ENCODE measurements at regions of chr10 and their contacts with region 1.

Region 1: GRCh38 chr10:70880077-70880534 is 8.3 kb downstream of the PCBD1 start:
- DNase-seq: peak; percentile 74 to 87 (median 78)
- ATAC-seq: peak; percentile 96
- H3K4me3 ChIP-seq: no peak overlapping the region
- H3K27ac ChIP-seq: no peak overlapping the region
- H3K4me1 ChIP-seq: no peaks in the 10 kb centered on the region; a peak in 1 of 5 replicates
- H3K27me3 ChIP-seq: no peaks in the 10 kb centered on the region
- CTCF ChIP-seq: peak; percentile 91 to 95 (median 95)
- EP300 ChIP-seq: no peak
- POLR2A ChIP-seq: no peak
- RAD21 ChIP-seq: peak; percentile 99

Region 2: GRCh38 chr10:70461215-70461986 is 418.7 kb before region 1 on chr10:
- CTCF ChIA-PET with region 1: interaction called, 21 read pairs
- POLR2A ChIA-PET with region 1: no interaction called
- in situ Hi-C with region 1: loop called (anchors 10 kb)
- intact Hi-C with region 1: loop called (anchors 5 kb)
- DNase-seq: peak; percentile 81 to 86 (median 83)
- ATAC-seq: peak; percentile 90
- H3K4me3 ChIP-seq: no peak overlapping the region
- H3K27ac ChIP-seq: no peak overlapping the region
- H3K4me1 ChIP-seq: peaks cover 5 to 15% of the 10 kb centered on the region in 2 experiments; a peak in 3 of 5 replicates
- H3K27me3 ChIP-seq: peaks cover 49 to 73% of the 10 kb centered on the region in 2 experiments
- CTCF ChIP-seq: peak; percentile 92 to 95 (median 94)
- EP300 ChIP-seq: no peak
- POLR2A ChIP-seq: no peak
- RAD21 ChIP-seq: peak; percentile 84 to 95

Region 3: DNA sequence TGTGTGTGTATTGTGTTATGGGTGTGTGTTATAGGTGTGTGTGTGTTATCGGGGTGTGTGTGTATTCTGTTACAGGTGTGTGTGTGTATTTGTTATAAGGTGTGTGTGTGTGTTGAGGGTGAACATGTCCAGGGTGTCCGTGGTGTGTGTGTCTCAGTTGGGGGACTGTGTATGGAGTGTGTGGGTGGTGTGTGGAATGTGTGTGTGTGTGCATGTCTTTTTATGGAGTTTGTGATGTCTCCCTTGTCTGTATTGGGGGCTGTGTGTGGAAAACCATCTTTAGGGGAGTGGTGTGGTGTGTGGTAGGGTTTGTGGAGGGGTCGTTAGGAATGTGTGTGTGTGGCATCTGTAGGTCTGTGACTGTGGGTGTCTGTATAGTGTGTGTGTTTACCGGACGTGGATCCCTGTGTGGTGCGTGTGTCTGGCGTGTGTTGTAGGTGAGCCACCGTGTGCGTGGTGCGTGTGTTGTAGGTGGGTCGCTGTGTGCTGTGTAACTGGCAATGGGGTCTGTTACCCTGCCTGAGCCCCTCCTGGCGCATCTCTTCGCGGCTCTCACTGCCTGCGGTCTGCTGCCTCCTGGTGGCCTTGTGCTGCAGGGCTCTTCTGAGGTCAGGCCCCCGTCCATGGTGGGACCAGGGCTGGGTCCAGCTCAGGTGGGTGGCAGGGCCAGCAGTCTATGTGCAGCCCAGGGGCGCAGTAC is 339.9 kb before region 1 on chr10:
- CTCF ChIA-PET with region 1: interaction called, 10 read pairs
- POLR2A ChIA-PET with region 1: no interaction called
- in situ Hi-C with region 1: loop called (anchors 5 kb)
- intact Hi-C with region 1: no loop called
- DNase-seq: peak; percentile 65 to 83 (median 80)
- ATAC-seq: peak; percentile 84
- H3K4me3 ChIP-seq: no peak overlapping the region
- H3K27ac ChIP-seq: no peak overlapping the region
- H3K4me1 ChIP-seq: peaks cover 0 to 39% of the 10 kb centered on the region in 2 experiments; a peak in 3 of 5 replicates
- H3K27me3 ChIP-seq: peaks cover 10 to 48% of the 10 kb centered on the region in 2 experiments; a peak in 3 of 5 replicates
- CTCF ChIP-seq: peak; percentile 88 to 95 (median 94)
- EP300 ChIP-seq: no peak
- POLR2A ChIP-seq: no peak
- RAD21 ChIP-seq: peak; percentile 71 to 92

Region 4: DNA sequence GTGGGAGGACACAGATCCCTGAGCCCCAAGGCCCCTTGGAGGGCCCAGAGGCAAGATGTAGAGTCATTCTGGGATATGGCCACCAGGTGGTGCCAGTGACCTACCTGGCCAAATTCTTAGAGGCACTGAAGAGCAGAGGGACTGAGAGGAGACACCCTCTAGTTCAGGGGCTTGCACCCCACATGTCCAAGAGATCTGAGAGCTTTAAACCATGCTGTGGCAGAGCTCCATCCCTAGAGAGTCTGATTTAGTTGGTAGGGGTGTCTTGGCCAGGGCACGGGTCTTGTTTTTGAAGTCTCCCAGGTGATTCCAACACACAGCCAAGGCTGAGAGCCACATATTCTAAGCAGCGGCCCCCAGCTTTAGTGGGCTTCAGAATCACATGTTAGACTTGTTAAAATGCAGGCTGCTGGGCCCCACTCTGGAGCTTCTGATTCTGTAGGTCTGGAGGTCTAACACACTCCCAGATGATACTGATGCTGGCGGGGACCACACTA is 330.1 kb before region 1 on chr10:
- CTCF ChIA-PET with region 1: interaction called, 43 read pairs
- POLR2A ChIA-PET with region 1: no interaction called
- in situ Hi-C with region 1: loop called (anchors 5 kb)
- intact Hi-C with region 1: loop called (anchors 1 kb)
- DNase-seq: peak; percentile 82 to 87 (median 84)
- ATAC-seq: peak; percentile 97
- H3K4me3 ChIP-seq: no peak overlapping the region
- H3K27ac ChIP-seq: no peak overlapping the region
- H3K4me1 ChIP-seq: peaks cover 8 to 13% of the 10 kb centered on the region in 2 experiments
- H3K27me3 ChIP-seq: no peaks in the 10 kb centered on the region
- CTCF ChIP-seq: peak; percentile 92 to 96 (median 95)
- EP300 ChIP-seq: no peak
- POLR2A ChIP-seq: no peak
- RAD21 ChIP-seq: peak; percentile 98 to 99

Region 5: DNA sequence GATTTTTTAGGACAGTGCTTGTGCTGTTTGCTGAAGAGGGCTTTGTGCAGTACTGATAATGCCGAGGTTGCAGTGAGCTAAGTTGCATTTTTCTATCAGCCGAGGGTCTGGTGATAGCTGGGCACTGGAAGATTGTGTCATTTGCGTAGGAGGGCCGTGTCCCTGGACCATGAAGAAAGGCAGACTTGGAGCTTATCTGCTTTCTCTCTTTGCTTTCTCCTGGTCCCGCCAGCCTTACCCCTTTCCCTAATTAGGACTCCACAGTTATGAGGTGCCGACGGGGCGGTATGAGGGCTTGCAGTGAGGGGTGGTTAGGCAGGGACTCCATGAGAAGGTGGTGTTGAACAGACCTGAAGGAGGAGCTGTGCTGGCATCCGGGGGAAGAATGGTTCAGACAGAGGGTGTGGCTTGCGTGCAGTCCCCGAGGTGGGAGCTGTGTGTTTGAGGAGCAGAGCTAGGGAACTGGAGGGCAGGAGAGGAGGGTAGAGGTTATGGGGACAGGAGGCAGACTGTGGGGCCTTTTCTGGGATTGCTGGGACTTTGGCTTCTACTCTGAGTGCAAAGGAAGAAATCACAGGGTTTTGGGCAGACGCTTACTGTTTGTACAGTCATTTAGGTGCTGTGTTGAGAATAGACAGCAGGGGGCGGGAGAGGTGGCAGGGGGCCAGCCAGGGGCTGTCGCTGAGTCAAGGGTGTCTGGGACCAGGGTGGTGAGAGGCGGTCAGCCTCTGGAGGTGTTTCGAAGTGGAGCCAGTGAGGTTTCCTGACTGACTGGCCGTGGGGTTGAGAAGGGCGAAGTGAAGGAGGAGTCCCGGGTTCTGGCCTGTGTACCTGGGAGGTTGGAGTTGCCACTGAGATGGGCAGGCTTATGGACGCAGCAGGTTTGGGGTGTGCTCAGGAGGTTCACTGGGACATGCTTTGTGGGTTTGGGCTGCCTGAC is 321.0 kb before region 1 on chr10:
- CTCF ChIA-PET with region 1: interaction called, 7 read pairs
- POLR2A ChIA-PET with region 1: no interaction called
- in situ Hi-C with region 1: no loop called
- intact Hi-C with region 1: loop called (anchors 2 kb)
- DNase-seq: peak; percentile 91 to 94 (median 93)
- ATAC-seq: peak; percentile 94
- H3K4me3 ChIP-seq: peak overlapping the region; percentile 31
- H3K27ac ChIP-seq: peak overlapping the region; percentile 76
- H3K4me1 ChIP-seq: peaks cover 25 to 54% of the 10 kb centered on the region in 2 experiments
- H3K27me3 ChIP-seq: no peaks in the 10 kb centered on the region
- CTCF ChIP-seq: peak; percentile 82 to 93 (median 88)
- EP300 ChIP-seq: peak; percentile 89
- POLR2A ChIP-seq: no peak
- RAD21 ChIP-seq: peak; percentile 83 to 87

Region 6: DNA sequence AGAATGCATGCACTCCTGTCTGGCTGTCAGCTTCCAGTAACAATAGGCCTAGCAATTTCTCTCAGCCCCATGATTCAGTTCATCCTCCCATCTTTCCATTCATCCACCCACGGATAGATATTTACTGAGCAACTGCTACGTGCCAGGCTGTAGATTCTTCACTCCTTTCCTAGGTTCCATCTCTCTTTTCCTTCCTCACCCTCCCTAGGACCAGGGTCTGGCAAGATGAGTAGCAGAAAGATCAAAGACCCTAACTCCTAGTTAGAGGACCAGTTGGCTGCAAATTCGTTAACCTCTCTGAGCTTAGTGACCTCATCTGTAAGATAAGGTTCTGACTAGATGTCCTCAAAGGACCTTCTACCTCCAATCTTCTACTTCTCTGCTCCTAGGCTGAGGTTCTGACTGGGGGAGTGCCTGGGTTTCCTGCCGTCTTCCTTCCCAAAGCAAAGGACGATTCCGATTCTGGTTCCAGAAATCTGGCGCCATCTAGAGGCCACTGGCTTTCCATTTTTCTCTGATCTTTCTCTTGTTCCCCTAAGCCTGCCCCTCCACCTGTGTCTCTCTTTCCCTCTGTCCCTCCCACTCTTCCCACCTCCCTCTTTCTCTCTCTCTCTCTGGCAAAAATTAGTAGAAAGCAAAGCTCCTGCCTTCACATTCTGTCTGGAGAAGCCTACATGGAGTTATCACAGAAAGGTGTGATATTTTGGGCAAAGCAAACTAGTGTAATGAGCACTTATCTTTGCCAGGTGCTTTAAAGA is 121.2 kb before region 1 on chr10:
- CTCF ChIA-PET with region 1: interaction called, 8 read pairs
- POLR2A ChIA-PET with region 1: interaction called, 3 read pairs
- in situ Hi-C with region 1: no loop called
- intact Hi-C with region 1: loop called (anchors 5 kb)
- DNase-seq: peak; percentile 78 to 89 (median 84)
- ATAC-seq: peak; percentile 78
- H3K4me3 ChIP-seq: no peak overlapping the region
- H3K27ac ChIP-seq: no peak overlapping the region
- H3K4me1 ChIP-seq: peaks cover 25 to 28% of the 10 kb centered on the region in 2 experiments
- H3K27me3 ChIP-seq: no peaks in the 10 kb centered on the region
- CTCF ChIP-seq: peak; percentile 80 to 91 (median 83)
- EP300 ChIP-seq: peak; percentile 30; the same call in 1 of the 2 replicates
- POLR2A ChIP-seq: no peak
- RAD21 ChIP-seq: peak; percentile 60 to 86

Region 7: DNA sequence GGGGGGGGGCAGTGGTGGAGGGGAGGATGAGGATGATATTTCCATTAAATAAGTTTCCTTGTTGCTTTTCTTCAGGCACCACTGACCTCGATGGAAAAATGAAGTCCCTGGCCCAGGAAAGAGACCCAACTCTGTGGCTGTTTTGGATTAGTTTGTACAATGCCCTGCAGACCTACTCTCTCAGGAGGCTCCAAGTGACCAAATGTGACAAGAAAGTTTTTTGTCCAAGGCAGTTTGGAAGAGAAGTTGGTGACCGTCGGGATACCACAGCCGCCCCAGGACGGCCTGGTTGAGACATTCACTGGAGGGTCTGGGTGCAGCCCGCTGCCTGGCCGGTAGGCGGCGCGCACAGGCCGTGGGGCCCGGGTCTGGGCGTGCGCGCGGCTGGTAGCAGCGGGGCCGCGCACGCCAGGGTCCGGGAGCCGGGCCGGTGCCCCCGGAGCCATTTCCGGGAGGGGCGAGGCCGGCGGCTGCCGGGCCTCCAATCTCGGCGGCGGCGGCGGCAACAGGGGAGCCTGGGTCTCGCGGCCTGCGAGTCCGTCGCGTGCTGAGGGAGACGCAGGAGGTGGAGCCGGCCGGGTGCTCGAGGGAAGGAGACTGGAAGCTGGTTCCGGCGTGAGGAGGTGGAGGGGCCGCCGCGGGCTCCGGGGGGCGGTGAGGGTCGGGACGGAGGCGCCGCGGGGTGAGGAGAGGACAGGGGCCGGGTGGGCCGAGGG is 64.4 kb before region 1 on chr10 and contains the start of gene SGPL1:
- CTCF ChIA-PET with region 1: interaction called, 27 read pairs
- POLR2A ChIA-PET with region 1: interaction called, 4 read pairs
- in situ Hi-C with region 1: loop called (anchors 10 kb)
- intact Hi-C with region 1: loop called (anchors 1 kb)
- DNase-seq: peak; percentile 91 to 99 (median 98)
- ATAC-seq: peak; percentile 90
- H3K4me3 ChIP-seq: peak within 1 kb of the TSS; percentile 80
- H3K27ac ChIP-seq: peak within 1 kb of the TSS; percentile 43; the same call in 2 of the 3 replicates
- H3K4me1 ChIP-seq: peaks cover 22 to 25% of the 10 kb centered on the region in 2 experiments
- H3K27me3 ChIP-seq: no peaks in the 10 kb centered on the region
- CTCF ChIP-seq: peak; percentile 90 to 98 (median 97)
- EP300 ChIP-seq: no peak
- POLR2A ChIP-seq: peak; percentile 63
- RAD21 ChIP-seq: peak; percentile 96 to 98
- polyA plus RNA-seq, gene SGPL1: 8.5 to 9.1 TPM

Region 8: GRCh38 chr10:71025535-71025934 is 145.4 kb after region 1 on chr10:
- CTCF ChIA-PET with region 1: no interaction called
- POLR2A ChIA-PET with region 1: no interaction called
- in situ Hi-C with region 1: no loop called
- intact Hi-C with region 1: no loop called
- DNase-seq: peak in 3 of 4 experiments; percentile 29 to 31 (median 29)
- ATAC-seq: no peak
- H3K4me3 ChIP-seq: no peak overlapping the region
- H3K27ac ChIP-seq: no peak overlapping the region
- H3K4me1 ChIP-seq: no peaks in the 10 kb centered on the region; a peak in 1 of 5 replicates
- H3K27me3 ChIP-seq: peaks cover 23 to 53% of the 10 kb centered on the region in 2 experiments
- CTCF ChIP-seq: no peak
- EP300 ChIP-seq: no peak
- POLR2A ChIP-seq: no peak
- RAD21 ChIP-seq: no peak

Measured in K562 (cell line).